Motor neuron (in vitro differentiated cells): ENCODE measurements at regions of chr6 and their contacts with region 1.

Region 1: DNA sequence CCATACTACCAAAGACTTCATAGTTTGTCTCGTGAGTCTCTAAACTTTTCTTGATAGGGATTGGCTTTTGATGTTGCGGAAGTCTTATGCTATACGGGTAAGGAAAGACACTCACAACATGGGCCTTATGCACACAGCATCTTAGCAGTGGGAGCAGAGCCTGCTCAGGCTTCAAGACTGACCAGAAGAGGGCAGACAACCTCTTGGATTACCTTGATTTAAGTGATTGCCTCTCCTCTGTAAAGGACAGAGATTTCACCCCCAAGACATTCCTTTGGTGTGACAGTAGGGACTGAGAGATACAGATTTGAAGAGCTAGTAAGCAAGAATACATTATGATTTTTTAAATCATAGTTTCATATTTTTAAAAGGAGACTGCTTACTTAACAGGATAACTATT is 71.0 kb upstream of the SAMD3 start:
- ATAC-seq: peak in 7 of 8 experiments; percentile 42 to 94 (median 85)
- H3K4me3 ChIP-seq: no peak overlapping the region
- H3K27ac ChIP-seq: no peak overlapping the region
- H3K4me1 ChIP-seq: no peaks in the 10 kb centered on the region

Region 2: DNA sequence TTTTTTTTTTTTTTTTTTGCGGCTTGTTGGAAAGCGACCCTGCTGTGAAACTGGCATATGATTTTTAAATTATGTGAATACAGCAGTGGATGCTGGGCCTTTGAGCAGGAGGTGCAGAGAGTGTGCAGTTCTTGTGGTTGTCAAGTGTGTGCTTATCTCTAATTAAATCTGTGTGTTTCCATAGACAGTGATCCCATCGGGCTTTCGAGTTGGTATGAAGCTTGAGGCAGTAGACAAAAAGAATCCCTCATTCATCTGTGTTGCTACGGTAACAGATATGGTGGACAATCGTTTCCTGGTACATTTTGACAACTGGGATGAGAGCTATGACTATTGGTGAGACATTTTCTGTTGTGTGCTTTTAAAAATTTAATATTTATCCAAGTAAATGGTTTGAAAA is 223.0 kb before region 1 on chr6:
- in situ Hi-C with region 1: loop called in 1 of 9 experiments (anchors 25 kb)
- ATAC-seq: peak in 4 of 8 experiments; percentile 27 to 76 (median 36)
- H3K4me3 ChIP-seq: no peak overlapping the region
- H3K27ac ChIP-seq: no peak overlapping the region
- H3K4me1 ChIP-seq: no peaks in the 10 kb centered on the region